ENCODE measurements at regions of chr11 and their contacts with region 1.

Region 1: DNA sequence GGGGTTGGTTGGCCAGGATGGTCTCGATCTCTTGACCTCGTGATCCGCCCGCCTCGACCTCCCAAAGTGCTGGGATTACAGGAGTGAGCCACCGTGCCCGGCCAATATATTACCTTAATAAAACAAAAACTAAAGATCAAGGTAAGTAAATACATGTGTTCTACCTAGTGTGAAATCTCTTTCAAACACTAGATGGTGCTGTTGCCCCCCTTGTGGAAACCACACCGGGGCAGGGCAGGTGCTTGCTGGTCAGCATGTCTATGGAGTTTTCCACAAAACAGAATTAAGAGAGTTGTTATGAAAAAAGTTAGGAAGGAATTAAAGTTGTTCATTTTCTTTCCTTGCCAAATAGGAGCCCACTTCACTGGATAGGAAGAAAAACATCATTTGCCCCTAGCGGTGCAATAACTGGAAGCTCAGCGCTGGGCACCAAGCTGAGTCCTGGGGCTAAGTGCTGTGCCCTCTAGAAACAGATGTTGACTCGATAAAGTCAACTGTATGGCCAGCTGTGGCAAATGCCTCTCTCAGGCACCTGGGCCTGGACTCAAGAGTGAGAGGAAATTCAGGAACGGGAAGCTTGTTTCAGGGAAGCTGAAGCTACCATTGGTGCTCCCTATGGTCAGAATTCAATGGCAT is 6.3 kb upstream of the KCNJ5 start:
- DNase-seq: peak; percentile 60
- H3K4me3 ChIP-seq: no peak overlapping the region
- H3K27ac ChIP-seq: no peak overlapping the region
- H3K4me1 ChIP-seq: peaks cover 24% of the 10 kb centered on the region
- H3K27me3 ChIP-seq: no peaks in the 10 kb centered on the region
- CTCF ChIP-seq: peak; percentile 67 to 81

Region 2: DNA sequence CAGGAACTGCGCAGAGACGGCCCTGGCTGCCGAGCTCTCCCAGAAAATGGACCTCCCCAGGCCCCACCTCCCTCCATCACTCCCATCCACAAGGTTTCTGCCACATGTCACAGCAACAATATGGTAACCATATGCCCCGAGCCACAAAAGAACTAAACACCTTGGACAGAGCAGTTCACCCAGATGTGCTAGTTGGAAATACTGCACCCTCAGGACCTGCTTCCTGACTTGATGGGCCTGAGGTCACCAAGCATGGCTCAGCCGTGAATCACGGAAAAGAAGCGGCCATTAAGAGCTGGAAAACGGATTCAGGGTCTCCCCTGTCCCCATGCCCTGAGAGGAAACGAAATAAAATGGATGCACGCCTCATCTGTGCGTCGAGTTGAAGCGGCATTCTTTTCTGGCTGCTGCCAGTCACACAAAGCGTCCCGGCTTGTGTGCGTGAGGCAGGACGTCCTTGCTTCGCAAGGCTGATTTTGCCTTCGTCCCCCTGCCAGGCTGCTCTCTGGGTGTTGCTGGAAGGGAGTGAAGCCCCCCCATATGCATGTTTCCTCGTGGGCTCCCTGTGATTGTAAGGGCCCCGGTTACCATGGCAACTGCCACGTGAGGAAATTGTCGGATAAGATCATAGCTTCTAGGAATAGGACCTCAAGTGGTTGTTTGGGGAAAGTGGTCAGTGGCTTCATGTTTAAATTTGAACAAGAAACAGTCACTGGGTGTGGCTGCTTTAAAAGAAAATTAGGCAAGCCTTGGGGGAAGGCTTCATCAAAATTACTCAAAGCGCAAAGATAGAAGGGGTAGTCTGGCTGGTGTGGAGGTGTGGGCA is 139.3 kb before region 1 on chr11:
- CTCF ChIA-PET with region 1: no interaction called
- dilution Hi-C with region 1: no loop called
- in situ Hi-C with region 1: no loop called
- intact Hi-C with region 1: no loop called
- DNase-seq: no peak
- H3K4me3 ChIP-seq: no peak overlapping the region
- H3K27ac ChIP-seq: no peak overlapping the region
- H3K4me1 ChIP-seq: no peaks in the 10 kb centered on the region
- H3K27me3 ChIP-seq: no peaks in the 10 kb centered on the region
- CTCF ChIP-seq: no peak

Region 3: DNA sequence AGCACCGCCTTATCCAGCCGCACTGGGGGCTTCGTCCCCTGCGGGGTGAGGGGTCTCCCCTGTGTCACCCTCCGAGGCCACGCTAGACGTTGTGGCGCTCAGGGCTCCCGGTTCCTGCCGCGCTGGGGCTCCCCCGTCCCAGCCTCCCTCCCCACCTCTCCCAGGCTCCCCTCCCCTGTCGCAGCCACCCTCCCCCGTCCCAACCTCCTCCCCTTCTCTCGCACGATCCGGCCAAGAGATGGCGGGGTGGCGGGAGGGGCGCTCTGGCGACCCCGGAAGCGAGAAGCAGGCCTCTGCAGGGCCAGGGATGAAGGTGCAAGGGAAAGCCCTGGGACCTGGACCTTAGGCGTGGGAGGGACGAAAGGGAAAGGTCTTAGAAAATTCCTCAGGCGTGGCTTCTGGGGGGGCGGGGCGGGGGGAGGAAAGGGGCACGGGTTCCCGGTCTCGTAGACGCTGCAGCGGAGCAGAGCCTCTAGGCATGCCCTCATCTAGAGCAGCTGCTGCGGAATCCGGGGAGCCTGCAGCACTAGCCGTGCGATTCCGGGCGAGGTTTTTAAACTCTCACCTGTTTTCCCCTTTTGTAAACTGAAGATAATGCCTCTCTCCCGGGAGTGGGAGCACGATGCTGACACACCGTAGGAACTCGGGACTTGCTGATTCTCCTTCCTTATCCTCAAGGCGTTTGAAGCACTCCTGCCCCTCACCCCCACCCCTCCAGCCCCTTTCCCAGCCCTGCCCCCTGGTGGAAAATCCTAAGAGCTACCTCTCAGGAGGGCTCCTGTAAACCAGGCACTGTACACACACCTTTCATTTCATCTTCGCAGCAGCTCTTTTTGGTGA is 20.7 kb after region 1 on chr11:
- CTCF ChIA-PET with region 1: interaction called, 15 read pairs
- dilution Hi-C with region 1: no loop called
- in situ Hi-C with region 1: no loop called
- intact Hi-C with region 1: loop called (anchors 1 kb)
- DNase-seq: peak; percentile 62
- H3K4me3 ChIP-seq: peak overlapping the region; percentile 33 to 60 (median 55)
- H3K27ac ChIP-seq: no peak overlapping the region
- H3K4me1 ChIP-seq: peaks cover 68% of the 10 kb centered on the region
- H3K27me3 ChIP-seq: no peaks in the 10 kb centered on the region
- CTCF ChIP-seq: peak; percentile 47 to 60

Region 4: DNA sequence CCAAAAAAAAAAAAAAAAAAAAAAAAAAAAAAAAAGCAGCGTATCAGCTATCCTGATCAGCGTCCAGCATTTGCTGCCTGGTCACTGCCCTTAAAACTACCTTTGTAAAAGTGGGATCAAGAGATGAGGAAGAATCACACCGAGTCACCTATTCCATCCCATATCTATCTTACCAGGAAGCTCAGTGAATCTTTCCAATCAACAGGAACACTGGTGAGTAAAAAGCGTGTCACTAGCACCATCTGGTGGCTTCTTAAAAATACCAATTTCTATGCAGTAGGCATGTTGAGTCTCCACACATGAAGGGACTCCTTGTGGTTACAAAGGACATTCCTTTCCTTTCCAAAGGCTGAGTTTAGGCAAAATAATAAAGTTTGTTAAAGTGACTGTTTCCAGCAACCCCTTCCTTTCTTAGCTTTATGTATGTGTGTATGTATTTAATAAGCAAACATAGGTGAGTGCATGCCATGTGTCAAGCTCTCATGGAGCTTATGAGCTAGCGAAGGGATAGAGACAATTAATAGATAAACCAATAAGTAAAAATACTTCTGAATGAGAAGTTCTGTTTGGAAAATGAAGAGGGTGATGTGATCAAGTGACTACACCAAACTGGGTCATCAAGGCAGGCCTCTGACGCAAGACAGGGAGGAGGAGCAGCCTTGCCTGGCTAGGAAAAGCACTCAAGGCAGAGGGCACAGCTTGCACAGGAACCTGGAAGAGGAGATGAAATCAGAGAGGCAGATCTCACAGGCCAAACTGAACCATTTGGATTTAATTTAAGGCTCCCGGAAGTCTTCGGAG is 71.8 kb after region 1 on chr11:
- CTCF ChIA-PET with region 1: interaction called, 21 read pairs
- dilution Hi-C with region 1: no loop called
- in situ Hi-C with region 1: loop called (anchors 5 kb)
- intact Hi-C with region 1: loop called (anchors 1 kb)
- DNase-seq: peak; percentile 64
- H3K4me3 ChIP-seq: no peak overlapping the region
- H3K27ac ChIP-seq: no peak overlapping the region
- H3K4me1 ChIP-seq: peaks cover 6% of the 10 kb centered on the region
- H3K27me3 ChIP-seq: no peaks in the 10 kb centered on the region
- CTCF ChIP-seq: peak; percentile 65 to 73

Region 5: DNA sequence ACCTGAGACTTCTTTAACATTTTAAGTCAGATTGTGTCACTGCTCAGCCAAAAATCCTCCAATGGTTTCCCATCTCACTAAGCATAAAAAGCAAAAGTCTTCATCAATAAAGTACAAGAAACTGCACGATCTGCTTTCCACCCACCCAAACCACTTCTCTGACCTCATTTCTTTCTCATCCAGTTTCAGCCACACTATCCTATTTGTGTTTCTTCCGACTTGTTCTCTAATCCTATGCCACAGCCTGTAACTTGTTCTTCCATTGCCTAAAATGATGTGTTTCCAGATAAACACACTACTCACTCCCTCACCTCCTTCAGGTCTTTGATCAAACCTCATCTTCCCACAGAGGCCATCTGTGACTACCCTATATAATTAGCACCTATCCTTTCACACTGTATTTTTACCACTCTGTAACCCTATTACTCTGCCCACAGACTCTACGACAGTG is 278.9 kb after region 1 on chr11:
- CTCF ChIA-PET with region 1: no interaction called
- dilution Hi-C with region 1: no loop called
- in situ Hi-C with region 1: no loop called
- intact Hi-C with region 1: no loop called
- DNase-seq: peak; percentile 54
- H3K4me3 ChIP-seq: no peak overlapping the region
- H3K27ac ChIP-seq: no peak overlapping the region
- H3K4me1 ChIP-seq: no peaks in the 10 kb centered on the region
- H3K27me3 ChIP-seq: no peaks in the 10 kb centered on the region
- CTCF ChIP-seq: no peak

Region 6: GRCh38 chr11:129331871-129332274 is 447.1 kb after region 1 on chr11:
- CTCF ChIA-PET with region 1: no interaction called
- dilution Hi-C with region 1: no loop called
- in situ Hi-C with region 1: loop called (anchors 5 to 10 kb)
- intact Hi-C with region 1: loop called (anchors 1 kb)
- DNase-seq: peak; percentile 66
- H3K4me3 ChIP-seq: no peak overlapping the region
- H3K27ac ChIP-seq: no peak overlapping the region
- H3K4me1 ChIP-seq: no peaks in the 10 kb centered on the region
- H3K27me3 ChIP-seq: no peaks in the 10 kb centered on the region
- CTCF ChIP-seq: peak; percentile 90 to 97

Region 7: DNA sequence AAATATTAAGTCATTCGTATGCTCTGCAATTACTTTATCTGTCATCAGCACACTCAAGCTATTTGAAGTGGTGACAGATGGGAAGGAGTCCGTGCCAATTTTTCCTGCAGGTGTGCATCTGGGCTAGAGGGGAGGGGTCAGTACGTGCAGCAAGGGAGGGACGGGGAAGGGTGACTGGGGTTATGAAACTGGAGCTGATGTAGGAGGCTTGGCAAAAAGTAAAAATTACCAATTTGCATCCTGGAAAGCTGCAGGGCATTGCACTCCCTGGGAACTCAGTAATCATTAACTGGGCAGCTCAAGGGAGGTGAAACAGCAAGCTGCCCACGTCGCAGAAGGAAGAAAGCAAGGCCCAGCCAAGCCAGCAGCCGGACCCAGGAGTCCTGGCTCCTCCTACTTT is 843.8 kb after region 1 on chr11:
- CTCF ChIA-PET with region 1: no interaction called
- dilution Hi-C with region 1: loop called (anchors 25 kb)
- in situ Hi-C with region 1: loop called in 1 of 2 experiments (anchors 25 kb)
- intact Hi-C with region 1: no loop called
- DNase-seq: no peak
- H3K4me3 ChIP-seq: no peak overlapping the region
- H3K27ac ChIP-seq: no peak overlapping the region
- H3K4me1 ChIP-seq: peaks cover 17% of the 10 kb centered on the region
- H3K27me3 ChIP-seq: no peaks in the 10 kb centered on the region
- CTCF ChIP-seq: no peak